ENCODE measurements at regions of chr4 and their contacts with region 1.

Region 1: GRCh38 chr4:46844325-46844917 is 64.6 kb downstream of the COX7B2 start:
- DNase-seq: peak in 6 of 9 experiments; percentile 19 to 65 (median 38)
- ATAC-seq: no peak
- H3K4me3 ChIP-seq: no peak overlapping the region
- H3K4me3 Mint-ChIP-seq: no peak overlapping the region
- H3K27ac ChIP-seq: no peak overlapping the region
- H3K27ac Mint-ChIP-seq: no peak overlapping the region
- H3K4me1 ChIP-seq: no peaks in the 10 kb centered on the region
- H3K4me1 Mint-ChIP-seq: no peaks in the 10 kb centered on the region
- H3K27me3 ChIP-seq: no peaks in the 10 kb centered on the region
- H3K27me3 Mint-ChIP-seq: peaks cover 3% of the 10 kb centered on the region
- CTCF ChIP-seq: peak; percentile 66

Region 2: DNA sequence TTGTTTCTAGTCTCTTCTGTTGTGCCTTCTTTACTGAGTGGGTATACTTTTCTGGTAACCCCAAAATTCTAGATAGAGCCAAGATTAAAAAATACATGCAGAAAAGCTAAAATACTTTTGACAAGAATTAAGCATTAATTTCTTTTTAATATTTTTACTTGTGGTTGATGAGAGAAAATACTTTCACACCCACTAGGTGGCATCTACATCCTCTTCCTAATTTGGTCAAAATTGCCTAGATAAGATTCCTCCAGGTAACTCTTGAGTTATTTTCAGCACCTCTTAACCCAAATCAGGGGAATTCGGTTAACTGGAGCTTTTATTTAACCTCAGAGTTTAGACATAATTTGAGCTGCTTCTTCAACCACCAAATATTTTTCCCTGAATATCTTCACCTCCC is 93.1 kb after region 1 on chr4:
- CTCF ChIA-PET with region 1: no interaction called
- POLR2A ChIA-PET with region 1: no interaction called
- intact Hi-C with region 1: no loop called
- DNase-seq: no peak
- ATAC-seq: no peak
- H3K4me3 ChIP-seq: no peak overlapping the region
- H3K4me3 Mint-ChIP-seq: no peak overlapping the region
- H3K27ac ChIP-seq: no peak overlapping the region
- H3K27ac Mint-ChIP-seq: no peak overlapping the region
- H3K4me1 ChIP-seq: no peaks in the 10 kb centered on the region
- H3K4me1 Mint-ChIP-seq: no peaks in the 10 kb centered on the region
- H3K27me3 ChIP-seq: no peaks in the 10 kb centered on the region
- H3K27me3 Mint-ChIP-seq: peaks cover 2% of the 10 kb centered on the region
- CTCF ChIP-seq: no peak

Region 3: DNA sequence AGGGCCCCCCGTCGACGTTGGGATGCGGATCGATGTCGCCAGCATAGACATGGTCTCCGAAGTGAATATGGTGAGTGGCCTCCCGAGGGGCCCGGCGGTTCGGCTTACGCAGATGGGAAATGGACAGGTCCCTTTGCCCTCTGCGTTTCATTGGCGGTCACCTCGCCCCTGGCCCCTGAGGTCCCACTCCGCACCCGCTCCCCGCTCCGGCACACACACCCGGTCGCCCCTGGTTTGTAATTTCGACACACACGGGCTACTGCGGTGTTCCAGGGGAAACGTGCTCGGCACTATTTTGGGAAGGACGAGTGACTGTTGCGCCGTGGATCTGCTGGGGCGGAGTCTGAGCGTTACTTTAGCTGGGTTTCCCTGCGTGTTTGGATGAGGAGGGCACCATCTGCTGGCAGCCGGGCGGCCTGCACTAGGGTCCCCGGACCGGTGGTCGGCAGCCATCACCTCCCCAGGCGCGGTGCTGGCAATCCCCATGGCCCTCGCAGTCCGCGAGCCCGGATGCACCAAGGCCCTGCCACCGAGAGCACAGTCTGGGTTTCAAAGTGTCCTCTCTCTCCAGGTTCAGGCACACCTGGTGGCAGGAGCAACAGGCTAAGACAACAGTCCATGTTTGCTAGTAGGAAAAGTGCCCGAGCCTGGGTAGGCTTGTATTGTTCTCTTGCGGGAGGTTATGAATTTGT is 188.1 kb after region 1 on chr4:
- CTCF ChIA-PET with region 1: interaction called, 4 read pairs
- POLR2A ChIA-PET with region 1: no interaction called
- intact Hi-C with region 1: loop called in 1 of 2 experiments (anchors 2 kb)
- DNase-seq: peak in 5 of 9 experiments; percentile 22 to 56 (median 44)
- ATAC-seq: peak; percentile 74
- H3K4me3 ChIP-seq: peak overlapping the region; percentile 29 to 38
- H3K4me3 Mint-ChIP-seq: peak overlapping the region; percentile 65
- H3K27ac ChIP-seq: no peak overlapping the region
- H3K27ac Mint-ChIP-seq: no peak overlapping the region
- H3K4me1 ChIP-seq: peaks cover 13% of the 10 kb centered on the region
- H3K4me1 Mint-ChIP-seq: peaks cover 17% of the 10 kb centered on the region
- H3K27me3 ChIP-seq: peaks cover 13% of the 10 kb centered on the region in 2 experiments
- H3K27me3 Mint-ChIP-seq: peaks cover 43% of the 10 kb centered on the region
- CTCF ChIP-seq: peak; percentile 55

Region 4: DNA sequence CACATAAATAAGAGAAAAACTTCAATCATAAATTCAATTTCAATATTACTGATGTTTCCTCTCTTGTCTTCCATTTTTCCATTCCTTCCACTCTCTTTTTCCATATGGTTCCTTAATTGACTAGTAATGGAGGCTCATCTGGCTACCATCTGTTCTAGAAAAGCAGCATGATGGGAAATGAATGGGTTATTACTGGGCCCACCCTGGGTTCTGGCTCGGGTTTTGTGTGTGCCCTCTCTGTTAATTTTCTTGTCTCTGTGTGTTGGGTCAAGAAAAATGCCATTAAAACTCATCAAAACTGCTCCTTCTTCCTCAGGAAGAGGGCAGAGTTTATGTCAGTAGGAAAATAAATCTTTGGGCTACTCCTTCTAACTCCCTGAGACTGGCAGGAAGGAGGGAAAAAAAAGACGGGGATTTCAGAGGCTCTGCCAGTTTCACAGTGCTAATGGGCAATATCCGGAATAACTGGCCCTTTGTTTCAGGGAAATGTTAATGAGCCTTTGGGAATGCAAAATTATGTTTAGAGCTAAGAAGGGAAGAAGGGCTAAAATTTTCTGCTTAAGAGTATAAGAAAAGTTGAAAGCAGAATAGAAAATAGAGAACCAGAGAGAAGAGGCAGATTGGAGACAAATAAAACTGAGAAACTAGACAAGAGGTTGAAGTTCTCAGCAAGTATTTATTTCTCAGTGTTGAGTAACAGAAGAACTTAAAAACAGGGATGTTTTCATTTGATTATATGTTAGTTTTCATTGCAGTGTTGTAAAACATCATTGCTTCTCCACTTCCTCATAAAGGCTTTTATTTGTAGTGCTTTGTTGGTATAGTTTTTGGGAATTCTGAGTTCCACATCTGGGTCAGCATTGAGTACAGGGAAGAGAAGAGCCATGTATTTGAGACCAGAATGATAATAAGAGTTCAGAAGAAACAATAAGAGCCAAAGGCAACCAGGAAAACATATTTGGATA is 206.6 kb after region 1 on chr4:
- CTCF ChIA-PET with region 1: no interaction called
- POLR2A ChIA-PET with region 1: no interaction called
- intact Hi-C with region 1: no loop called
- DNase-seq: no peak
- ATAC-seq: no peak
- H3K4me3 ChIP-seq: no peak overlapping the region
- H3K4me3 Mint-ChIP-seq: no peak overlapping the region
- H3K27ac ChIP-seq: no peak overlapping the region
- H3K27ac Mint-ChIP-seq: no peak overlapping the region
- H3K4me1 ChIP-seq: no peaks in the 10 kb centered on the region
- H3K4me1 Mint-ChIP-seq: no peaks in the 10 kb centered on the region
- H3K27me3 ChIP-seq: peaks cover 0 to 3% of the 10 kb centered on the region in 2 experiments
- H3K27me3 Mint-ChIP-seq: peaks cover 22% of the 10 kb centered on the region
- CTCF ChIP-seq: no peak

Region 5: GRCh38 chr4:47122592-47123291 is 278.3 kb after region 1 on chr4:
- CTCF ChIA-PET with region 1: no interaction called
- POLR2A ChIA-PET with region 1: no interaction called
- intact Hi-C with region 1: loop called in 1 of 2 experiments (anchors 10 kb)
- DNase-seq: peak in 7 of 9 experiments; percentile 2 to 54 (median 33)
- ATAC-seq: no peak
- H3K4me3 ChIP-seq: no peak overlapping the region
- H3K4me3 Mint-ChIP-seq: no peak overlapping the region
- H3K27ac ChIP-seq: no peak overlapping the region
- H3K27ac Mint-ChIP-seq: no peak overlapping the region
- H3K4me1 ChIP-seq: no peaks in the 10 kb centered on the region
- H3K4me1 Mint-ChIP-seq: no peaks in the 10 kb centered on the region
- H3K27me3 ChIP-seq: no peaks in the 10 kb centered on the region
- H3K27me3 Mint-ChIP-seq: peaks cover 3% of the 10 kb centered on the region
- CTCF ChIP-seq: peak; percentile 65

Region 6: GRCh38 chr4:47383829-47384427 is 539.5 kb after region 1 on chr4:
- CTCF ChIA-PET with region 1: no interaction called
- POLR2A ChIA-PET with region 1: no interaction called
- intact Hi-C with region 1: loop called in 1 of 2 experiments (anchors 1 kb)
- DNase-seq: peak in 2 of 9 experiments; percentile 11 to 38
- ATAC-seq: no peak
- H3K4me3 ChIP-seq: no peak overlapping the region
- H3K4me3 Mint-ChIP-seq: no peak overlapping the region
- H3K27ac ChIP-seq: no peak overlapping the region
- H3K27ac Mint-ChIP-seq: no peak overlapping the region
- H3K4me1 ChIP-seq: no peaks in the 10 kb centered on the region
- H3K4me1 Mint-ChIP-seq: no peaks in the 10 kb centered on the region
- H3K27me3 ChIP-seq: no peaks in the 10 kb centered on the region
- H3K27me3 Mint-ChIP-seq: peaks cover 2% of the 10 kb centered on the region
- CTCF ChIP-seq: peak; percentile 50

Region 7: GRCh38 chr4:47562297-47562696 is 717.9 kb after region 1 on chr4:
- CTCF ChIA-PET with region 1: no interaction called
- POLR2A ChIA-PET with region 1: no interaction called
- intact Hi-C with region 1: loop called in 1 of 2 experiments (anchors 2 kb)
- DNase-seq: peak in 2 of 9 experiments; percentile 2 to 3
- ATAC-seq: no peak
- H3K4me3 ChIP-seq: no peak overlapping the region
- H3K4me3 Mint-ChIP-seq: no peak overlapping the region
- H3K27ac ChIP-seq: no peak overlapping the region
- H3K27ac Mint-ChIP-seq: no peak overlapping the region
- H3K4me1 ChIP-seq: no peaks in the 10 kb centered on the region
- H3K4me1 Mint-ChIP-seq: peaks cover 8% of the 10 kb centered on the region
- H3K27me3 ChIP-seq: no peaks in the 10 kb centered on the region
- H3K27me3 Mint-ChIP-seq: no peaks in the 10 kb centered on the region
- CTCF ChIP-seq: no peak

Region 8: DNA sequence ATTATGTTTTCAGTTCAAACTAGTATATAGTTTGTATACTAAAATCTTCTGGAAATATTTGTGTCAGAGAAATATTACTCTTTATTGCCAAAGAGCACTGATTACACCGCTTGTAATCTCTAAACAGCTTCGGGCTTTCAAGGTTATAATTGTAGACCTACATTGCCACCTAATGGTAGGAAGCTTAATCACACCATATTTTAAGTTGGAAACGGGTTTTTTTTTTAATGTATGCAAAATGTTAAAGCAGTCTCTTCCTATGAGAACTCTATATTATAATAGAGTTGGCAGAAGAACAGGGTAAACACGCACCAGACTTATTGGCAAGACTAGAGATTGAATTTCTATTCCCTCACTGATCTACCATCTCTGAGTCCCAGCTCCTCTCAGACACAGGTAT is 1089.4 kb after region 1 on chr4:
- CTCF ChIA-PET with region 1: no interaction called
- POLR2A ChIA-PET with region 1: no interaction called
- intact Hi-C with region 1: loop called in 1 of 2 experiments (anchors 5 kb)
- DNase-seq: peak in 2 of 9 experiments; percentile 60 to 72
- ATAC-seq: peak; percentile 74
- H3K4me3 ChIP-seq: no peak overlapping the region
- H3K4me3 Mint-ChIP-seq: no peak overlapping the region
- H3K27ac ChIP-seq: no peak overlapping the region
- H3K27ac Mint-ChIP-seq: no peak overlapping the region
- H3K4me1 ChIP-seq: no peaks in the 10 kb centered on the region
- H3K4me1 Mint-ChIP-seq: no peaks in the 10 kb centered on the region
- H3K27me3 ChIP-seq: no peaks in the 10 kb centered on the region
- H3K27me3 Mint-ChIP-seq: peaks cover 6% of the 10 kb centered on the region
- CTCF ChIP-seq: peak; percentile 87